ENCODE measurements at regions of chr5 and their contacts with region 1.

Region 1: GRCh38 chr5:96752341-96753016 is 55.3 kb downstream of the ERAP1 start:
- DNase-seq: peak; percentile 71
- H3K4me3 ChIP-seq: no peak overlapping the region
- H3K27ac ChIP-seq: no peak overlapping the region
- H3K4me1 ChIP-seq: peaks cover 3% of the 10 kb centered on the region
- H3K27me3 ChIP-seq: no peaks in the 10 kb centered on the region
- CTCF ChIP-seq: peak; percentile 36 to 55
- POLR2A ChIP-seq: no peak

Region 2: GRCh38 chr5:96288166-96288844 is 464.2 kb before region 1 on chr5:
- CTCF ChIA-PET with region 1: no interaction called
- POLR2A ChIA-PET with region 1: no interaction called
- dilution Hi-C with region 1: no loop called
- intact Hi-C with region 1: no loop called
- DNase-seq: no peak
- H3K4me3 ChIP-seq: no peak overlapping the region
- H3K27ac ChIP-seq: no peak overlapping the region
- H3K4me1 ChIP-seq: no peaks in the 10 kb centered on the region
- H3K27me3 ChIP-seq: no peaks in the 10 kb centered on the region
- CTCF ChIP-seq: no peak
- POLR2A ChIP-seq: no peak

Region 3: GRCh38 chr5:96708610-96709009 is 43.9 kb before region 1 on chr5:
- CTCF ChIA-PET with region 1: no interaction called
- POLR2A ChIA-PET with region 1: no interaction called
- dilution Hi-C with region 1: no loop called
- intact Hi-C with region 1: no loop called
- DNase-seq: no peak
- H3K4me3 ChIP-seq: no peak overlapping the region
- H3K27ac ChIP-seq: no peak overlapping the region
- H3K4me1 ChIP-seq: peaks cover 8% of the 10 kb centered on the region
- H3K27me3 ChIP-seq: no peaks in the 10 kb centered on the region
- CTCF ChIP-seq: no peak
- POLR2A ChIP-seq: no peak

Region 4: GRCh38 chr5:96768708-96769251 is 16.3 kb after region 1 on chr5:
- CTCF ChIA-PET with region 1: interaction called, 62 read pairs
- POLR2A ChIA-PET with region 1: interaction called, 5 read pairs
- dilution Hi-C with region 1: no loop called
- intact Hi-C with region 1: no loop called
- DNase-seq: no peak
- H3K4me3 ChIP-seq: no peak overlapping the region
- H3K27ac ChIP-seq: no peak overlapping the region
- H3K4me1 ChIP-seq: no peaks in the 10 kb centered on the region
- H3K27me3 ChIP-seq: no peaks in the 10 kb centered on the region
- CTCF ChIP-seq: no peak
- POLR2A ChIP-seq: no peak

Region 5: GRCh38 chr5:96789794-96790330 is 37.4 kb after region 1 on chr5:
- CTCF ChIA-PET with region 1: interaction called, 10 read pairs
- POLR2A ChIA-PET with region 1: interaction called, 3 read pairs
- dilution Hi-C with region 1: no loop called
- intact Hi-C with region 1: no loop called
- DNase-seq: no peak
- H3K4me3 ChIP-seq: no peak overlapping the region
- H3K27ac ChIP-seq: no peak overlapping the region
- H3K4me1 ChIP-seq: peaks cover 9% of the 10 kb centered on the region
- H3K27me3 ChIP-seq: no peaks in the 10 kb centered on the region
- CTCF ChIP-seq: no peak
- POLR2A ChIP-seq: no peak

Region 6: DNA sequence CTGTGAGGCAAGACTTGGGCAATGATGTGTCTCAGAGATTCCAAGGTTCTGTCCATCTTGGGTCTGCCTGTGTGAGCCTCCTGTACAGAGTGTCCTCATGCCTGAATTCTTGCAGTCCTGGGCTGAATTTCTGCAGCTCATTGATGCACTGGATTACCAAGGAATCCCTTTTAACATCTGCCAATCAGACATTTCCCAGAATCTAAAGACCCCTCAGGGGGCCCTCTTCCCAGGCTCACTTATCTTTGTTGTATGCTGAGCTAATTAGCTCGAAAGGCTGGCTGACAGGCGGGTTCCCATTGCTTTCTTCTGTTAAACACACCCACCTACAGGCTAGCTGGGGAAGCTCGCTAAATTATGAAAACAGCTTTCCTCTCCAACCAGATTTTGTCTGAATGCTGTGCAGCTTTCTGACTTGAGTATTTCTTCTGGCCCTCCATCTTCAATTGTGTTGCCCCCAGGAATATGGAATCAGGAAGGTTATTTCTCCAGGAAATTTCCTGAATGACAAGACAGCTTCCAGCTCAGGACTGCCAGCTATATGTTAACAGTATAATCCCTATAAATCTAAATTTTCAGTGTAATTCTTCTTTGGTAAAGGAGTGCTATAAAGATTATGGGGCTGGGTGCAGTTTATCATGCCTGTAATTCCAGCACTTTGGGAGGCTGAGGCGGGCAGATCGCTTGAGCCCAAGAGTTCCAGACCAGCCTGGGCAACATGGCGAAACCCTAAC is 390.2 kb after region 1 on chr5 and contains the start of gene LIX1:
- CTCF ChIA-PET with region 1: interaction called, 40 read pairs
- POLR2A ChIA-PET with region 1: no interaction called
- dilution Hi-C with region 1: no loop called
- intact Hi-C with region 1: no loop called
- DNase-seq: peak; percentile 50
- H3K4me3 ChIP-seq: no peak within 1 kb of the TSS
- H3K27ac ChIP-seq: no peak within 1 kb of the TSS
- H3K4me1 ChIP-seq: no peaks in the 10 kb centered on the region
- H3K27me3 ChIP-seq: peaks cover 5 to 13% of the 10 kb centered on the region in 2 experiments
- CTCF ChIP-seq: peak; percentile 52 to 53
- POLR2A ChIP-seq: no peak
- total RNA-seq, gene LIX1: not detected in 2 replicates

Measured in endothelial cell of umbilical vein (primary cell).